ENCODE measurements at regions of chr12 and their contacts with region 1.

Region 1: DNA sequence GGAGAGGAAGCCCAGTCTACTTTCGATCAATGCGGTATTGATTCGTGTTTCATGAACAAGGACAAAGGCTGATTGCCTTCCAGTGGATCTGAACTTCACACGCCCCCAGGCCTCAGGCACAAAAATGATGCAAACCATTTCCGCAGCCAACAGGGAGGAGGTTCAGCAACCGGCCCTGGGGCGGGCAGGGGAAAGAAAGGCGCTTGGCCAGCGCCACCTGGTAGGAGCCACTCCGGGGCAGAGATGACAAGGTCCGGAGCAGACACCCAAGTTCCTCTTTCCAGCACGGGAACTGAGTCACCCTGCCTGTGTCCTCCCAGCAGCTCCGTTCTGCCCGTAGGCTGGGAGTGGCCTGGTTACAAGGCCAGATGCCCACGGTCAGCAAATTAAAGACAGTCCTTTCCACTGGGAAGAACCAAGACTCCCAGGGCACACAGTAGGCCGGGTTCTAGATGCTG is 136.4 kb downstream of the SCARB1 start:
- DNase-seq: peak; percentile 98
- H3K4me3 Mint-ChIP-seq: no peak overlapping the region
- H3K27ac Mint-ChIP-seq: peak overlapping the region; percentile 60
- H3K4me1 Mint-ChIP-seq: peaks cover 50% of the 10 kb centered on the region
- H3K27me3 Mint-ChIP-seq: no peaks in the 10 kb centered on the region
- CTCF ChIP-seq: no peak

Region 2: GRCh38 chr12:124466216-124467128 is 260.8 kb before region 1 on chr12:
- CTCF ChIA-PET with region 1: no interaction called
- intact Hi-C with region 1: no loop called
- DNase-seq: no peak
- H3K4me3 Mint-ChIP-seq: no peak overlapping the region
- H3K27ac Mint-ChIP-seq: no peak overlapping the region
- H3K4me1 Mint-ChIP-seq: no peaks in the 10 kb centered on the region
- H3K27me3 Mint-ChIP-seq: no peaks in the 10 kb centered on the region
- CTCF ChIP-seq: no peak

Region 3: DNA sequence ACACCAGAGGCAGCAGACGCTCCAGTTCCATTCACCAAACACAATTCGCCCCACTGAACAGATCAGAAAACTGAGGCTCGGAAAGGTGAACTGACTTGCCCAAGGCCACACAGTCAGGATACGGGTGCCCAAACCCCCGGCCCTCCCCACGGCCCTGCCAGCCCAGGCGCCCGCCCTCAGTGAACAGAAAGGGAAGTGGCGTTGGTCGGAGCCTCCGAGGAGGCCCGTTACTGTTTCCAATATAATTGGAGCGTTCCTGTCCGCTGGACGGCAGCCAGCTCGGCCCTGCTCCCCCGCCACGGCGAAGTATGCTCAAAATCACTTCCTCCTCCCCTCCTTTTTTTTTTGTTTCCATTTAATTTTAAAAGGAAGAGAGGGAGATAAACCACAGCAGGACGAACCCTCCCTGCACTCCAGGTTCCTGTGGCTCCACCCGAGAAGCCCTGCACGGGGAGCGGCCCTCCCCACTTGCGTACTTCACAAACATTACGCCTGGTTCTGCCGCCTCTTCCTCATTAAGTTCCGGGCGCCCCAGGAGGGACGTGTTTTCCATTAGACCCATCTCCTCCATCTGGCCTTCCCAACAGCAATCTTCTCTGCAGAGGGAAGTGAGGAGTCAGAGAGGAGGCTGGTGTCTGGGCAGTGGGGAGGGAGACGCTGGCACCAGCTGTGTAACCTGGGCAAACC is 221.0 kb before region 1 on chr12:
- CTCF ChIA-PET with region 1: interaction called, 4 read pairs
- intact Hi-C with region 1: loop called (anchors 5 kb)
- DNase-seq: peak; percentile 71
- H3K4me3 Mint-ChIP-seq: peak overlapping the region; percentile 56
- H3K27ac Mint-ChIP-seq: peak overlapping the region; percentile 82
- H3K4me1 Mint-ChIP-seq: peaks cover 73% of the 10 kb centered on the region
- H3K27me3 Mint-ChIP-seq: no peaks in the 10 kb centered on the region
- CTCF ChIP-seq: no peak

Region 4: GRCh38 chr12:124609041-124609995 is 118.0 kb before region 1 on chr12:
- CTCF ChIA-PET with region 1: no interaction called
- intact Hi-C with region 1: loop called (anchors 5 kb)
- DNase-seq: peak; percentile 99
- H3K4me3 Mint-ChIP-seq: peak overlapping the region; percentile 60
- H3K27ac Mint-ChIP-seq: peak overlapping the region; percentile 79
- H3K4me1 Mint-ChIP-seq: peaks cover 75% of the 10 kb centered on the region
- H3K27me3 Mint-ChIP-seq: no peaks in the 10 kb centered on the region
- CTCF ChIP-seq: no peak

Measured in Calu3 (cell line).